PC-3 (cell line): ENCODE measurements at regions of chr9 and their contacts with region 1.

Region 1: GRCh38 chr9:115604831-115605483 is 487.0 kb upstream of the TNC start:
- DNase-seq: peak; percentile 91
- ATAC-seq: peak; percentile 97
- H3K4me3 ChIP-seq: no peak overlapping the region
- H3K27ac ChIP-seq: peak overlapping the region; percentile 57
- H3K4me1 ChIP-seq: peaks cover 15% of the 10 kb centered on the region
- H3K27me3 ChIP-seq: no peaks in the 10 kb centered on the region
- CTCF ChIP-seq: no peak

Region 2: DNA sequence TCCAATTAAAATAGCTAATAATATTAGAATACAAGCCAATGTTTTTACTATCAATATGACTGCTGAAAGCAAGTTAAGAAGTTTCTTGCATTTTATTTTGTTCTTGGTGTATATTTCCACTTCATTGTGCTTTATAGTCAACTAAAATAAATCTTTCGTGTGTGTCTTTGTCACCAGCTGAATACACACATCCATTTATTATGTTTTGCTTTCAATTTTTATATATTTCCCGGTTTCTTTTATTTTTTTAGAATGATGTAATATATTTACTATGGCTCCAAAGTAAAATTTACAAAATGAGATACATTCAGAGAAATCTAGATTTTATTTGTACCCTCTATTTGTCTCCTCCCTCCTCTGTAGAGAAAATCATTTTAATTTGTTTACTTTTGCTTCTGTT is 52.7 kb after region 1 on chr9:
- CTCF ChIA-PET with region 1: no interaction called
- POLR2A ChIA-PET with region 1: no interaction called
- intact Hi-C with region 1: loop called (anchors 5 kb)
- DNase-seq: no peak
- ATAC-seq: peak; percentile 71
- H3K4me3 ChIP-seq: no peak overlapping the region
- H3K27ac ChIP-seq: no peak overlapping the region
- H3K4me1 ChIP-seq: no peaks in the 10 kb centered on the region
- H3K27me3 ChIP-seq: no peaks in the 10 kb centered on the region
- CTCF ChIP-seq: no peak

Region 3: DNA sequence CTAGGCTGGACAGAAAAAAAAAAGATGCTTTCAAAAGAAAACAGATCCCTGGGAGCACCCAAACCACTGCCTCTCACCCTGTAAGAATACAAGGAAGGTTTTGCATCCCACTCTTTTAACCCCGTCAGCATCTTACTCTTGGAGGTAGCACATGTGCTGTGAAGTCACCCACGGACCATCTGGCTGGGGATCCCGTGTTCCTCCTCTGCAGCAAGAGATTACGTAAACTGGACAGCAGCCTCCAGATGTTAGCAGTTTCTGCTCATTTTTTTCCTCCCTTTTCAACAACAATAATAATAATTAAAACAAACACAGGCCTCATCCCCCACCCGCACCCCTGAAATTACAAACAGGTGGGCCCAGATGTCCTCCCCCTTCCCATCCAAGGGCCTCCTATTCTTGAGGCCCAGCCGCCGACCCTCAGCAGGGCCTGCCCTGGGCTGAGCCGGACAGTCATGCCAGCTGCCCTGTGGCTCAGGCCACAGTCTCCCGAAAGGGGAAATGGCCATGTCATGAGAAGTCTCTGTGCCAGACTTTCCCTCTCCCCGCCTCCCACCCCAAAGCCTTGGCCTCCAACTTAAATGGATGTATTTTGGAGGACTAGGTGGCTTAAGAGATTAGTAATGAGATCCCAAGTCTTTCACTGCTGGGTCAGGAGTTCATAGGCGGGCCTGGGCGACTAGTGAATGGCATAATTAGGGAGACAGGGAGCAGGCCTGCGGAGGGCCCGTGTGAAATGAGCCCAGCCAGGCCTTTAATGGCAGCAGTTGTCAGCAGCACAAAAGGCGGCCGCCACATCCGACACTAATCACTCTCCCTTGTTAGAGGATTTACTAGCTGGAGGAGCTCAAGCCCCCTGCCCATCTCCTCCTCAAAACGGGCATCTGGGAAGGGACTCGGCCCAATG is 713.8 kb after region 1 on chr9:
- CTCF ChIA-PET with region 1: no interaction called
- POLR2A ChIA-PET with region 1: no interaction called
- intact Hi-C with region 1: no loop called
- DNase-seq: no peak
- ATAC-seq: no peak
- H3K4me3 ChIP-seq: no peak overlapping the region
- H3K27ac ChIP-seq: no peak overlapping the region
- H3K4me1 ChIP-seq: no peaks in the 10 kb centered on the region
- H3K27me3 ChIP-seq: peaks cover 13% of the 10 kb centered on the region
- CTCF ChIP-seq: no peak